CD8-positive, alpha-beta T cell (primary cell): ENCODE measurements at regions of chr2 and their contacts with region 1.

Region 1: DNA sequence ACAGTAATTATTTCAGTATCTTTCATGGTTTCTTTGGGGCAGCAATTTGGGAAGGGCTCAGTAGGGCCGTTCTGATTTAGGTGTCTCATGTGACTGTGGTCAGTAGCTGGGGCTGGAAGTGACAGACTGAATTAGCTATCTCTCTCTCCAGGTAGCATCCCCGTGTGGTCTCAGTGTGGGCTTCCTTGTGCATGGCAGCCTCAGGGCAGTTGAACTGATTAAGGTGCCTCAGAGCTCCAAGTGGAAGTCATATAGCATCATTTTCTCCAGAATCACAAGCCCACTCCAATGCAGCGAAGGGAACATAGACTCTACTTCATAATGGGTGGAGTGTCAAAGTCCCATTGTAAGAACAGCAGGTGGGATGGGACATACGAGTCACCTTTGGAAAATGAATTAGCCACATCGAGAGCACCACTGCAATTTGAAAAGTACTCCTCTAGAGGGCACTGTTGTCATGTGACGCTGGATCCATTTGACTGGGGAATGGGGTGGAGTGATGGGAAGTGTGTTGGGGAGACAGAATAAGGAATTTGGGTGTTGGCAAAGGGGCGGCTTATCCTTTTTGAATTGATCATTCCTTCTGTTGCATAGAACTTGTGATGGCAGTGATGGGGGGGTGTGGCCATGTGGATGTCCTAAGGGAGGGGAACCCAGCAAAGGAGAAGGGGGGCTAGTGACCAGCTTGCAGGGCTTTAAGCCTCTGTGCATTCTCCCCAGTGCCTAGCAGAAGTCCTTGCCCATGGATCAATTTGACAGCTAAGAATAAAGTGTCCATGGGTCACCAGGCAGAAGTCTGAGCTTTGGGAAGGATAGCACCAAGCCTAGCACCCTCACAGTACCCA is 39.3 kb upstream of the FAM136A start:
- DNase-seq: peak in 7 of 9 experiments; percentile 7 to 62 (median 36)
- ATAC-seq: peak; percentile 51
- H3K4me3 ChIP-seq: no peak overlapping the region
- H3K4me3 Mint-ChIP-seq: no peak overlapping the region
- H3K27ac ChIP-seq: no peak overlapping the region
- H3K27ac Mint-ChIP-seq: no peak overlapping the region
- H3K4me1 ChIP-seq: no peaks in the 10 kb centered on the region
- H3K4me1 Mint-ChIP-seq: no peaks in the 10 kb centered on the region
- H3K27me3 ChIP-seq: no peaks in the 10 kb centered on the region
- H3K27me3 Mint-ChIP-seq: peaks cover 8% of the 10 kb centered on the region
- CTCF ChIP-seq: peak; percentile 94

Region 2: DNA sequence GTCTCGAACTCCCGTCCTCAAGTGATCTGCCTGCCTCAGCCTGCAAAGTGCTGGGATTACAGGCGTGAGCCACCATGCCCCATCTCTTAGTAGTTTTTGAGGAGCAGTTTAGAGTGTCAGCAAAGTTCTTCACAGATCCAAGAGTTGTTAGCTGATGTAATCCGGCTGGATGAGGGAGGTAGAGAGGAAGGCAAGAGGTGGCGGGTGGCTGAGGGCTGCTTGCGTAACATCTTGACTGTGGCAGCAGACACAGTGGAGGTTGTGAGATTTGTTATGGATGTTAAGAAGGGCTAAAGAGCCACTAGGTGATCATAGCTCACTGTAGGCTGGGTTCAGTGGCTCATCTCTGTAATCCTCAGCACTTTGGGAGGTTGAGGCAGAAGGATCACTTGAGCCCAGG is 19.8 kb before region 1 on chr2:
- CTCF ChIA-PET with region 1: interaction called, 14 read pairs
- POLR2A ChIA-PET with region 1: no interaction called
- intact Hi-C with region 1: no loop called
- DNase-seq: no peak
- ATAC-seq: no peak
- H3K4me3 ChIP-seq: no peak overlapping the region
- H3K4me3 Mint-ChIP-seq: no peak overlapping the region
- H3K27ac ChIP-seq: no peak overlapping the region
- H3K27ac Mint-ChIP-seq: no peak overlapping the region
- H3K4me1 ChIP-seq: no peaks in the 10 kb centered on the region
- H3K4me1 Mint-ChIP-seq: no peaks in the 10 kb centered on the region
- H3K27me3 ChIP-seq: no peaks in the 10 kb centered on the region
- H3K27me3 Mint-ChIP-seq: peaks cover 13% of the 10 kb centered on the region
- CTCF ChIP-seq: no peak

Region 3: DNA sequence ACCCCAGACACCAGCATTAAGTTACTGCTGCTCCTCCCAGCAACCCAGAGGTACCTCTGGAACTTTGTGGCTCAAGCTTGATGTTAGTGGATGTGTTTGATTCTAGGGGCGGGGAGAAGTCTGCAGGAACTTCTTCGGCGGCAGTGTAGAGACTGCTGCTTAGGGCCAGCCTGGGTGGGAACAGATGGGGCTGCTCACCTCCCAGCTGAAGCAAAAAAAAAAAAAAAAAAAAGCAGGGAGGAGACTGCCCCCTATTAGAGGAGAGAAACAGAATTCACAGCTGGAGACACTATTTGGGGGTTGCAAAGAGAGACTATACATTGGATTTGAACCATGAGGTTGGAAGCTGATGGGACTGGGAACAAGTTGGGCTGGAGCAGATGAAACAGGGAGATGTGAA is 10.7 kb before region 1 on chr2:
- CTCF ChIA-PET with region 1: interaction called, 12 read pairs
- POLR2A ChIA-PET with region 1: no interaction called
- intact Hi-C with region 1: no loop called
- DNase-seq: no peak
- ATAC-seq: no peak
- H3K4me3 ChIP-seq: no peak overlapping the region
- H3K4me3 Mint-ChIP-seq: no peak overlapping the region
- H3K27ac ChIP-seq: no peak overlapping the region
- H3K27ac Mint-ChIP-seq: no peak overlapping the region
- H3K4me1 ChIP-seq: no peaks in the 10 kb centered on the region
- H3K4me1 Mint-ChIP-seq: no peaks in the 10 kb centered on the region
- H3K27me3 ChIP-seq: no peaks in the 10 kb centered on the region
- H3K27me3 Mint-ChIP-seq: no peaks in the 10 kb centered on the region
- CTCF ChIP-seq: no peak

Region 4: GRCh38 chr2:70607121-70607561 is 266.0 kb after region 1 on chr2:
- CTCF ChIA-PET with region 1: interaction called, 14 read pairs
- POLR2A ChIA-PET with region 1: no interaction called
- intact Hi-C with region 1: no loop called
- DNase-seq: no peak
- ATAC-seq: no peak
- H3K4me3 ChIP-seq: no peak overlapping the region
- H3K4me3 Mint-ChIP-seq: no peak overlapping the region
- H3K27ac ChIP-seq: no peak overlapping the region
- H3K27ac Mint-ChIP-seq: no peak overlapping the region
- H3K4me1 ChIP-seq: no peaks in the 10 kb centered on the region
- H3K4me1 Mint-ChIP-seq: peaks cover 2% of the 10 kb centered on the region
- H3K27me3 ChIP-seq: no peaks in the 10 kb centered on the region
- H3K27me3 Mint-ChIP-seq: peaks cover 17% of the 10 kb centered on the region
- CTCF ChIP-seq: no peak

Region 5: DNA sequence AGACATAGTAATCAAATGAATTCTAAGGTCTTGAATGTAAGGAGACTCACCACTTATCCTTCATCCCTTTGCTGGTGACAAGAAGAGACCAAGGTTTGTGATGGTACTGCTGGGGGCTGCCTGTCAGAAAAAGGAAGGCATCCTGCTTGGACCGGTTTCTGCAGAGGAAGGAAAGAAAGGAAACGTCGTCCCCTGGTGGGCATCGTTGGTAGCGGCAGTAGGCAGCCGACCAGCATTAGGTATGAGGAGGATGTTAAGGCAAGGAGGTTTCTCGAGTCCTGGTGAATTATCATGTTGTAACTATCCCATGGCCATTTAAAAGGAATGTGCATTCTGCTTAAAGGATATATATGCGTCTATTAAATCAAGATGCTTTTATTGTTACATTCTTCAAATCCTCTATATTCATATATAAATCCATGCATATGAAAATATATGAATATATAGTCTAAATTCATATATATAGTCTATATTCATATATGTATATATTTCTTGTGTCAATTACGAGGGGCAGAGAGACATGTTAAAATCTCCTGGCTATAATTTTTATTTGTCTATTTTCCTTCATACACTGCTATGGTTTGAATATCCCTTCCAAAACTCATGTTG is 306.8 kb after region 1 on chr2:
- CTCF ChIA-PET with region 1: interaction called, 43 read pairs
- POLR2A ChIA-PET with region 1: no interaction called
- intact Hi-C with region 1: loop called (anchors 1 kb)
- DNase-seq: peak; percentile 55 to 83 (median 72)
- ATAC-seq: peak; percentile 96
- H3K4me3 ChIP-seq: no peak overlapping the region
- H3K4me3 Mint-ChIP-seq: no peak overlapping the region
- H3K27ac ChIP-seq: no peak overlapping the region
- H3K27ac Mint-ChIP-seq: no peak overlapping the region
- H3K4me1 ChIP-seq: no peaks in the 10 kb centered on the region
- H3K4me1 Mint-ChIP-seq: no peaks in the 10 kb centered on the region
- H3K27me3 ChIP-seq: no peaks in the 10 kb centered on the region
- H3K27me3 Mint-ChIP-seq: peaks cover 6% of the 10 kb centered on the region
- CTCF ChIP-seq: peak; percentile 94

Region 6: GRCh38 chr2:70789304-70790135 is 448.4 kb after region 1 on chr2:
- CTCF ChIA-PET with region 1: no interaction called
- POLR2A ChIA-PET with region 1: no interaction called
- intact Hi-C with region 1: loop called in 1 of 2 experiments (anchors 5 kb)
- DNase-seq: peak; percentile 30 to 78 (median 67)
- ATAC-seq: peak; percentile 73
- H3K4me3 ChIP-seq: peak overlapping the region; percentile 32 to 36
- H3K4me3 Mint-ChIP-seq: peak overlapping the region; percentile 82
- H3K27ac ChIP-seq: no peak overlapping the region
- H3K27ac Mint-ChIP-seq: no peak overlapping the region
- H3K4me1 ChIP-seq: peaks cover 8% of the 10 kb centered on the region
- H3K4me1 Mint-ChIP-seq: peaks cover 13% of the 10 kb centered on the region
- H3K27me3 ChIP-seq: peaks cover 7 to 11% of the 10 kb centered on the region in 2 experiments
- H3K27me3 Mint-ChIP-seq: peaks cover 51% of the 10 kb centered on the region
- CTCF ChIP-seq: peak; percentile 54